ENCODE measurements at regions of chr1 and their contacts with region 1.

Region 1: GRCh38 chr1:156892190-156893047 is 1.1 kb upstream of the PEAR1 start:
- DNase-seq: peak; percentile 95
- ATAC-seq: peak; percentile 96
- H3K4me3 Mint-ChIP-seq: peak overlapping the region; percentile 35
- H3K27ac Mint-ChIP-seq: no peak overlapping the region
- H3K4me1 Mint-ChIP-seq: peaks cover 7% of the 10 kb centered on the region
- H3K27me3 Mint-ChIP-seq: peaks cover 49% of the 10 kb centered on the region
- CTCF ChIP-seq: peak; percentile 76

Region 2: GRCh38 chr1:156705918-156706656 is 186.3 kb before region 1 on chr1:
- CTCF ChIA-PET with region 1: interaction called, 11 read pairs
- POLR2A ChIA-PET with region 1: no interaction called
- intact Hi-C with region 1: no loop called
- DNase-seq: peak; percentile 87
- ATAC-seq: peak; percentile 67
- H3K4me3 Mint-ChIP-seq: peak overlapping the region; percentile 75
- H3K27ac Mint-ChIP-seq: peak overlapping the region; percentile 75
- H3K4me1 Mint-ChIP-seq: peaks cover 34% of the 10 kb centered on the region
- H3K27me3 Mint-ChIP-seq: peaks cover 19% of the 10 kb centered on the region
- CTCF ChIP-seq: peak; percentile 99

Region 3: GRCh38 chr1:156797212-156797871 is 95.1 kb before region 1 on chr1:
- CTCF ChIA-PET with region 1: interaction called, 64 read pairs
- POLR2A ChIA-PET with region 1: no interaction called
- intact Hi-C with region 1: loop called (anchors 2 kb)
- DNase-seq: peak; percentile 77
- ATAC-seq: peak; percentile 84
- H3K4me3 Mint-ChIP-seq: no peak overlapping the region
- H3K27ac Mint-ChIP-seq: no peak overlapping the region
- H3K4me1 Mint-ChIP-seq: peaks cover 6% of the 10 kb centered on the region
- H3K27me3 Mint-ChIP-seq: no peaks in the 10 kb centered on the region
- CTCF ChIP-seq: peak; percentile 91

Region 4: GRCh38 chr1:156838981-156839410 is 53.4 kb before region 1 on chr1:
- CTCF ChIA-PET with region 1: interaction called, 144 read pairs
- POLR2A ChIA-PET with region 1: no interaction called
- intact Hi-C with region 1: loop called (anchors 5 kb)
- DNase-seq: peak; percentile 64
- ATAC-seq: peak; percentile 54
- H3K4me3 Mint-ChIP-seq: no peak overlapping the region
- H3K27ac Mint-ChIP-seq: no peak overlapping the region
- H3K4me1 Mint-ChIP-seq: peaks cover 41% of the 10 kb centered on the region
- H3K27me3 Mint-ChIP-seq: peaks cover 39% of the 10 kb centered on the region
- CTCF ChIP-seq: peak; percentile 95

Region 5: DNA sequence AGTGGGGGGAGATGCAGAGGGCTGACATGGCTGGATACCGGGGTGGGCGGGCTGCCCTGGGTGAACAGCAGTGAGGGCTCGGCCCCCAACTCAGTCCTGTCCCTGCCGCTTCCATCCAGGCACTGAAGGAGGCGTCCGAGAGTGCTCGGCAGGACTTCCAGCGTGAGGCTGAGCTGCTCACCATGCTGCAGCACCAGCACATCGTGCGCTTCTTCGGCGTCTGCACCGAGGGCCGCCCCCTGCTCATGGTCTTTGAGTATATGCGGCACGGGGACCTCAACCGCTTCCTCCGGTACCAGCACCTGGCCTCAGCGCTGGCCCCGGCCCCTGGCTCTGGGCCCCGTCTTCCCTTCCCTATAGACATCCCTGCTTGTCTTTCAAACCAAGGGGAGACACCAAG is 16.1 kb before region 1 on chr1:
- CTCF ChIA-PET with region 1: interaction called, 83 read pairs
- POLR2A ChIA-PET with region 1: no interaction called
- intact Hi-C with region 1: no loop called
- DNase-seq: no peak
- ATAC-seq: no peak
- H3K4me3 Mint-ChIP-seq: no peak overlapping the region
- H3K27ac Mint-ChIP-seq: no peak overlapping the region
- H3K4me1 Mint-ChIP-seq: no peaks in the 10 kb centered on the region
- H3K27me3 Mint-ChIP-seq: peaks cover 5% of the 10 kb centered on the region
- CTCF ChIP-seq: no peak

Region 6: GRCh38 chr1:156927215-156928042 is 35.0 kb after region 1 on chr1:
- CTCF ChIA-PET with region 1: interaction called, 94 read pairs
- POLR2A ChIA-PET with region 1: interaction called, 5 read pairs
- intact Hi-C with region 1: loop called (anchors 5 kb)
- DNase-seq: peak; percentile 83
- ATAC-seq: peak; percentile 70
- H3K4me3 Mint-ChIP-seq: peak overlapping the region; percentile 41
- H3K27ac Mint-ChIP-seq: no peak overlapping the region
- H3K4me1 Mint-ChIP-seq: peaks cover 32% of the 10 kb centered on the region
- H3K27me3 Mint-ChIP-seq: peaks cover 77% of the 10 kb centered on the region
- CTCF ChIP-seq: peak; percentile 78